ENCODE measurements at regions of chr22 and their contacts with region 1.

Region 1: GRCh38 chr22:34105461-34106062 is 185.3 kb upstream of the LARGE1 start:
- DNase-seq: peak; percentile 31 to 76 (median 62)
- ATAC-seq: peak; percentile 69 to 98 (median 90)
- H3K4me3 ChIP-seq: no peak overlapping the region
- H3K27ac ChIP-seq: no peak overlapping the region
- H3K4me1 ChIP-seq: no peaks in the 10 kb centered on the region
- H3K27me3 ChIP-seq: no peaks in the 10 kb centered on the region
- CTCF ChIP-seq: peak; percentile 43 to 63 (median 56)

Region 2: GRCh38 chr22:33302049-33302545 is 803.5 kb before region 1 on chr22:
- intact Hi-C with region 1: loop called in 1 of 3 experiments (anchors 10 kb)
- DNase-seq: peak; percentile 56 to 92 (median 80)
- ATAC-seq: peak; percentile 92 to 98 (median 97)
- H3K4me3 ChIP-seq: no peak overlapping the region
- H3K27ac ChIP-seq: no peak overlapping the region
- H3K4me1 ChIP-seq: peaks cover 0 to 4% (median 0%) of the 10 kb centered on the region in 3 donors
- H3K27me3 ChIP-seq: no peaks in the 10 kb centered on the region
- CTCF ChIP-seq: peak; percentile 78 to 94 (median 88)

Region 3: DNA sequence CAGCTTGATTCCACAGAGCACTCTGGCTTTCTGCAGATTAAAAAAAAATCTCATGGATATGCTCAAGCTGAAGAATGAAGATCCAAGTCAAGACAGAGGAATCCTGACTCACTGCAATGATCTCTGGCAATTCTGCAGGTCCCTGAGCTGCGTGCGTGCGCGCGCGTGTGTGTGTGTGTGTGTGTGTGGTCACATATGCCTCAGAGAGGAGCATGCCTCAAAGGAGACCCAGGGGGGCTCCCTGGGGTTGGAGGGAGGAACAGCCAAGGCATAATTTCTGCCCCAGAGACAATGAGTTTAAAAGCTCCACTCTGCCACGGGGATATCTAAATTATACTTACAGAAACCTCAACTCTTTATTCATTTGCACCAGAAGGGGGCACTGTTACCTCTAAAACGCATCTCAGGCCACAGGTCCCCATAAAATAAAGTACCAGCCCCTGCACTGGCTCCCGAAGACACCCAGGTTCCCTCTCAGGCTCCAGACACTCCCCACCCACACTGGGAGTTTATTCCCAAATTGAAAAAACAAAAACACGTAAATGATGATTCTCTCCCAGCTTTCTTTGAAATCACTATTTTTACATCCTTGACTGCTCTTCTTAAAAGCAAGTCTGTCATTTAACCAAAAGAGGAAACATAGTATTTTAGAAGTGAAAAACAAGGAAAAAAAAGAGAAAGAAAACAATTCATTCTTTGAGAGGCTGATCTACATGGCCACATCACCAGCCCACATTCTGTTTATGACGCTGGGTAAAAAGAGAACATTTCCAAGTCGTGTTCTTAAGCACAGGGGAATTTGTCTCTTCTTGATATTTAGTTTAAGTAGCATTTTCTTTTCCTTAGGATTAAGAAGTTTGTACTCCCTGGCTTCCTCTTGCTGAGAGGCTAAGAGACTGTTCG is 586.2 kb before region 1 on chr22:
- intact Hi-C with region 1: loop called in 1 of 3 experiments (anchors 10 kb)
- DNase-seq: peak in 2 of 6 donors; percentile 23 to 49
- ATAC-seq: peak; percentile 52 to 86 (median 82)
- H3K4me3 ChIP-seq: no peak overlapping the region
- H3K27ac ChIP-seq: no peak overlapping the region
- H3K4me1 ChIP-seq: no peaks in the 10 kb centered on the region
- H3K27me3 ChIP-seq: no peaks in the 10 kb centered on the region
- CTCF ChIP-seq: peak; percentile 19 to 60 (median 48)

Region 4: DNA sequence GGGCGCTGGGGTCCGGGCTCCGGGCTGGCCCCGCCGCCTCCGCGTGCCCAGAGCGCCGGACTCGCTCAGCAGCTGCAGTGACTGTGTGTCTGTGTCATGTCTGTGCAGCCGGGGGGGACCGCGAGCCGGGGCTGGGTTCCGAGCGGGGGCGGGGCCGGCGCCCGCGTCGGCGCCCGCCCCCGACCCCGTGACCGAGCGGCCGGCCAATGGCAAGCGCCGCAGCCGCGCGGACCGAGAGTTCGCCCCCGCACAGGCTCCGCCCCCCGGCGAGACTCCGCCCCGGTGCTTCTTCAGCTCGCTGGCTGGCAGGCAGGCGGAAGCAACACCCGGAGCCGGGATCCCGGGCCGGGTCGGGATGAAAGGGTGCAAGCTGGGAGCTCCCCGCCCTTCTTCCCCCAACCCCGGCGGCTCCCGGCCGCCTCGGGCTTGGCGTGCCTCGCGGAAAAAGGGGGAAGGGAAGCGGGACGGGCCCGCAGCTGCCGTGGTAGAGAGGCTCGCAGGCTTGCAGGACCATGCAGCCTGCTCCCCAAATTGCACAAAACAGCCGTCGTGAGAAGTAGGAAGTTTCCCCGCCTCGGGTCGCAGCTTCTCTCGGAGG is 184.5 kb before region 1 on chr22:
- intact Hi-C with region 1: loop called in 2 of 3 experiments (anchors 5 to 10 kb)
- DNase-seq: peak; percentile 98 to 99 (median 99)
- ATAC-seq: peak; percentile 87 to 93 (median 92)
- H3K4me3 ChIP-seq: peak overlapping the region; percentile 42 to 88 (median 62)
- H3K27ac ChIP-seq: peak overlapping the region in 1 of 4 donors; percentile 51
- H3K4me1 ChIP-seq: peaks cover 3 to 10% (median 5%) of the 10 kb centered on the region in 3 donors
- H3K27me3 ChIP-seq: no peaks in the 10 kb centered on the region
- CTCF ChIP-seq: no peak

Region 5: DNA sequence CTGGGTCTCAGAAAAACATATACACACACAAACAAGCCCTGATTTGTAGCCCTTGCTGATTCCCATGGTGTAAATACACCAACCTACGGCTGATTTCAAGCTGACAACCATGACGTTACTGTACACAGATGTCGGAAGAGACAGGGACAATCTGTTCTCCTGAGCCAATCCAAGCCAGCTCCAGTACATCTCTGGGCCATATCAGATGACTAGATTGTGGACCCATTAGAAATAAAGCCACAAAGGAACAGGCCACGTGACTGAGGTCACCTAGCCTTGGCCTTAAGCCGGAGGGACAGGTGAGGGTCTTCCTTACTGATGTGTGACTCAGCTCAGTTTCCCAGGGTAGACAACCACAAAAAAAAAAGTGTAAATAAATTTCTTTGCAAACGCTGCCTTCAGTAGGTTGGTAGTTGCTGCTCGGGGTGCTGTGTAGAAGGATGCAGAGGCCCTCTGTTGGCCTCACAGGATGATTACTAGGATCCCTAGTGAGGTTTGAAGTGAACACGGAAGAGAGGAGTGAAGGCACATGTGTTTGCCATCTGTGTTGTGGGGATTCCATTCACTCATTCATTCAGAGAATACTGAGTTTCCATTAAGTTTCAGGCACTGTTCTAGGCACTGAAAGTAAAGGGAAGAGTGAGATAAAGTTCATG is 86.2 kb before region 1 on chr22:
- intact Hi-C with region 1: no loop called
- DNase-seq: no peak
- ATAC-seq: no peak
- H3K4me3 ChIP-seq: no peak overlapping the region
- H3K27ac ChIP-seq: no peak overlapping the region
- H3K4me1 ChIP-seq: no peaks in the 10 kb centered on the region
- H3K27me3 ChIP-seq: no peaks in the 10 kb centered on the region
- CTCF ChIP-seq: no peak

Region 6: DNA sequence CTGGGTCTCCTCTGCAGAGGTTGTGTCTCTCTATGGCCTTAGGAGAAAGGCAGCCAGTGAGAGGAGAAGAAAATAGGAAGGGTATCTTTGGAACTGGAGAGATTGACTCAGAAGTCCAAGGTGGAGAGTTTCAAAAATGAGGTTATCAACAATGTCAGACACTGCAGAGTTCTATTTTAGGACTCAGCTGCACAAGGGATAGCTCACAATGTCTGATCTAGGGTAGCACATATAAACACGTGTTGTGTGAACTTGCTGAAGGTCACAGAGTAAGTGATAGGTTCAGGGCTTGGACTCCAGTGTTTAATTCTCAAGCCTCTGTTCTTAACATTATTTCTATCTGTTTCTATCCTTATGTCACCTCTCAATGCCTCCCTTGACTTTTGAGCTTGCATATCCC is 119.7 kb after region 1 on chr22:
- intact Hi-C with region 1: no loop called
- DNase-seq: no peak
- ATAC-seq: no peak
- H3K4me3 ChIP-seq: no peak overlapping the region
- H3K27ac ChIP-seq: no peak overlapping the region
- H3K4me1 ChIP-seq: no peaks in the 10 kb centered on the region
- H3K27me3 ChIP-seq: peaks cover 0 to 4% (median 0%) of the 10 kb centered on the region in 4 donors
- CTCF ChIP-seq: no peak

Region 7: GRCh38 chr22:34454598-34454997 is 349.0 kb after region 1 on chr22:
- intact Hi-C with region 1: no loop called
- DNase-seq: no peak
- ATAC-seq: no peak
- H3K4me3 ChIP-seq: no peak overlapping the region
- H3K27ac ChIP-seq: no peak overlapping the region
- H3K4me1 ChIP-seq: no peaks in the 10 kb centered on the region
- H3K27me3 ChIP-seq: no peaks in the 10 kb centered on the region
- CTCF ChIP-seq: no peak